IMR-90 (cell line): ENCODE measurements at regions of chr16 and their contacts with region 1.

Region 1: GRCh38 chr16:84175350-84176081 is 11.3 kb downstream of the TAF1C start:
- DNase-seq: peak; percentile 53
- ATAC-seq: peak; percentile 69
- H3K4me3 ChIP-seq: no peak overlapping the region
- H3K27ac ChIP-seq: no peak overlapping the region
- H3K4me1 ChIP-seq: peaks cover 15% of the 10 kb centered on the region
- H3K27me3 ChIP-seq: no peaks in the 10 kb centered on the region
- CTCF ChIP-seq: peak; percentile 76
- POLR2A ChIP-seq: no peak
- RAD21 ChIP-seq: peak; percentile 84

Region 2: GRCh38 chr16:83967806-83968305 is 207.7 kb before region 1 on chr16 and contains the start of gene NECAB2:
- CTCF ChIA-PET with region 1: no interaction called
- POLR2A ChIA-PET with region 1: no interaction called
- dilution Hi-C with region 1: no loop called
- in situ Hi-C with region 1: loop called (anchors 10 kb)
- intact Hi-C with region 1: loop called (anchors 1 kb)
- DNase-seq: peak; percentile 8
- ATAC-seq: peak; percentile 90
- H3K4me3 ChIP-seq: peak within 1 kb of the TSS; percentile 16; the same call in 1 of the 2 replicates
- H3K27ac ChIP-seq: no peak within 1 kb of the TSS
- H3K4me1 ChIP-seq: no peaks in the 10 kb centered on the region
- H3K27me3 ChIP-seq: peaks cover 25% of the 10 kb centered on the region
- CTCF ChIP-seq: peak; percentile 73
- POLR2A ChIP-seq: no peak
- RAD21 ChIP-seq: peak; percentile 84
- total RNA-seq, gene NECAB2: under 0.01 TPM in 1 of 2 replicates, not detected in the other

Region 3: DNA sequence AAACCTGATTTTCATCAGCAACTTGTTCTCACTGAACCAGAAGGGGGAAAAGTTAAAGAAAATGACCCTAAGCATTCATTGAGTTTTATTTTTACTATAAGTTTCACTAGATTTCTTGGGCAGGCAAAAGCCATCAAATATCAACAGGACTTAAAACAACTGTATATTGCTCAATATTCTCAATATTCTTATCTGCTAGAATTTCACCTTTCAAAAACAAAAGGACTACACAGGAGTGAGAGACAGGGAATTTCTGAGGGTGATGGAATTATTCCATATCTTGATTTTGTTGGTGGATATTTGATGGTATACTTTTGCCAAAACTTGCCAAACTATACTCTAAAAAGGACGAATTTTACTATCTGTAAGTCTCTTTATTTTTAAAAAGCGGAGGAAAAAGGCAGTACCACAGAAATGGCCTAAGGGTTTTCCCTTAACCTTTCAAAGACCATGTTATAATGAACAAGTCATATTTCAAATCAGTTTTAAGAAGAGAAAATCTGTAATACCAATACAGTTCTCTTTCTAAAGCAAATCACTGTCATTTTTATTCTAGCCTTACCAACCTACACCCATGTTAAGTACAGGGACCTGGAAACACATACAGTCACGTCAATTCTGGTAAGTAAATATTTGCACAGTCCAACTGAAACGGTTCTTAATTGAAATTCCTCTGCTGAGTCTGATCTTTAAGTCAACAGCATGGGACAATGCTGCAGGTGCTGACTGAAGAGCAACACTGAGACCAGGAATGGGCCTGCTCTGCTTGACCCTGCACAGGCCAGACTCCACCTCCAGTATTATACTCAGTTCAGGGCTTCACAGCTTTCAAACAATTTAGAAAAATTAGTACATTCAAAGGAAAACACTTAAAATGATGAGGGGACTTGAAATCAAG is 79.2 kb before region 1 on chr16:
- CTCF ChIA-PET with region 1: interaction called, 5 read pairs
- POLR2A ChIA-PET with region 1: no interaction called
- dilution Hi-C with region 1: no loop called
- in situ Hi-C with region 1: no loop called
- intact Hi-C with region 1: loop called (anchors 5 kb)
- DNase-seq: no peak
- ATAC-seq: no peak
- H3K4me3 ChIP-seq: no peak overlapping the region
- H3K27ac ChIP-seq: no peak overlapping the region
- H3K4me1 ChIP-seq: peaks cover 4% of the 10 kb centered on the region
- H3K27me3 ChIP-seq: no peaks in the 10 kb centered on the region
- CTCF ChIP-seq: no peak
- POLR2A ChIP-seq: no peak
- RAD21 ChIP-seq: no peak

Region 4: DNA sequence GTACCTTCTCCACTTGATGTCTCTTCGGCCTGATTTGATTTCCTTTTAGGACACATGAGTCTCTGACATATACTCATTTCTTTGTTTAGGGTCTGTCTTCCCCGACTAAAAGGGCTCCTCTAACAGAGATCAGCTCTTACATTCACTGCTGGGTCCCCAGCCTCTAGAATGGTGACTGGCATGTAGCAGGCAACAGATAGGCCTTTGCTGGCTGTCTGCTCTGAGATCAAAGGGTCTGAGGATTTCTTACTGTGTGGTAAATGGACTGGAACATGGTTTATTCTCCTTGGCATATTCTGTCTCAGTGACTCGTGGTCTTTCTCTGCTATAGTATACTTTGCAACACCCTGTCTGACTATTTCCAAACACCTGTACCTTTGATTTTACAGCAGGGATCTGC is 13.7 kb before region 1 on chr16:
- CTCF ChIA-PET with region 1: interaction called, 14 read pairs
- POLR2A ChIA-PET with region 1: no interaction called
- dilution Hi-C with region 1: no loop called
- in situ Hi-C with region 1: no loop called
- intact Hi-C with region 1: no loop called
- DNase-seq: no peak
- ATAC-seq: no peak
- H3K4me3 ChIP-seq: no peak overlapping the region
- H3K27ac ChIP-seq: no peak overlapping the region
- H3K4me1 ChIP-seq: no peaks in the 10 kb centered on the region
- H3K27me3 ChIP-seq: peaks cover 48% of the 10 kb centered on the region
- CTCF ChIP-seq: no peak
- POLR2A ChIP-seq: no peak
- RAD21 ChIP-seq: no peak

Region 5: GRCh38 chr16:84308120-84308519 is 132.6 kb after region 1 on chr16:
- CTCF ChIA-PET with region 1: interaction called, 3 read pairs
- POLR2A ChIA-PET with region 1: interaction called, 3 read pairs
- dilution Hi-C with region 1: no loop called
- in situ Hi-C with region 1: no loop called
- intact Hi-C with region 1: loop called (anchors 5 kb)
- DNase-seq: peak; percentile 34
- ATAC-seq: peak; percentile 75
- H3K4me3 ChIP-seq: no peak overlapping the region
- H3K27ac ChIP-seq: no peak overlapping the region
- H3K4me1 ChIP-seq: peaks cover 13% of the 10 kb centered on the region
- H3K27me3 ChIP-seq: no peaks in the 10 kb centered on the region
- CTCF ChIP-seq: peak; percentile 69
- POLR2A ChIP-seq: no peak
- RAD21 ChIP-seq: peak; percentile 79